ENCODE measurements at regions of chr5 and their contacts with region 1.

Region 1: DNA sequence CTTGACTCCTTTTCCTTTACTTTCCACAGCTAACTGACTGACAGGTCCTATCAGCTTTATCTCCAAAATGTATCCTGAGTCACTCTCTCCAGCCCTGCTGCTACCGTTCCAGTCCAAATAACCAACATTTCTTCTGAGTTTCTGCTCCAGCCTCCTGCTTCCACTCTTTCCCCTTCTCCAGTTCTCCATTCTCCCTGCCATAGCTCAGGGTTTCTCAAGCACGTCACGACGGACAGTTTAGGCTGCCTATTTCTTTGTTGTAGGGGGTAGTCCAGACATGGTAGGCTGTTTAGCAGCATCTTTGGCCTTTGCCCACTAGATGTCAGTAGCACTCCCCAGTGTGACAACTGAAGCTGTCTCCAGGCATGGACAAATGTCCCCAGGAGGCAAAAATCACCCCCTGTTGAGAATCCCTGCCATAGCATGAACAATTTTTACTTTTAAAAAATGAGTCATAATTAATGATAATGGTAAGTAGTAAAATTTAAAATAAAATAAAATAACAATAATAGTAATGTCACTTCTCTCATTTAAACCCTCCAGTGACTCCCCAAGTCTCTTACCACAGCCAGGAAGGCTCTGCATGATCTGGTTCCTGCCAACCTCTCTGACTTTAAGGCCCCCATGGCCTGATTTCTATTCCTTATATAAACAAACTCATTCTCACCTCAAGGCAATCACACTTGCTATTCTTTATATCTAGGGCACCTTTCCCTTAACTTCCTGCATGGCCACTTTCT is 105.4 kb upstream of the FER start:
- DNase-seq: peak; percentile 82
- H3K4me3 ChIP-seq: no peak overlapping the region
- H3K27ac ChIP-seq: no peak overlapping the region
- H3K4me1 ChIP-seq: peaks cover 5% of the 10 kb centered on the region
- H3K27me3 ChIP-seq: no peaks in the 10 kb centered on the region
- CTCF ChIP-seq: peak; percentile 84 to 93
- POLR2A ChIP-seq: no peak

Region 2: DNA sequence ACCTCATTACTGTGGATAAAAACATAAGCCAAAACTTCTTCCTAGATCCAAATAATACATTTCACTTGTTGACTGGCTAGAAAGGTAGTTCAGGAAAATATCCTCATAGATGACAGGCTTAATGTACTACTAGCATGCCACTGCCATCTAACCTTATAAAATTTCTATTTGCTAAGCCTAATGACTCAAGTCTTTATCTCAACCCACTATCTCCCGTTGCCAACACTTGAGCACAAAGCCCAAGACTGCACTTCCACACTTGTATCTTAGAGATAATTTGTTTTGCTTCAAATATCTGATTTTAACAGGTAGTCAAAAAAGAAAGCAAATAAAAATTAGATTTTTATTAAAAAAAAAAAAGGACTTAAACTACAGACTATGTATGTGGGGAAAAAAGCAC is 303.1 kb before region 1 on chr5:
- CTCF ChIA-PET with region 1: no interaction called
- POLR2A ChIA-PET with region 1: no interaction called
- dilution Hi-C with region 1: no loop called
- intact Hi-C with region 1: no loop called
- DNase-seq: no peak
- H3K4me3 ChIP-seq: no peak overlapping the region
- H3K27ac ChIP-seq: no peak overlapping the region
- H3K4me1 ChIP-seq: no peaks in the 10 kb centered on the region
- H3K27me3 ChIP-seq: no peaks in the 10 kb centered on the region
- CTCF ChIP-seq: no peak
- POLR2A ChIP-seq: no peak

Region 3: DNA sequence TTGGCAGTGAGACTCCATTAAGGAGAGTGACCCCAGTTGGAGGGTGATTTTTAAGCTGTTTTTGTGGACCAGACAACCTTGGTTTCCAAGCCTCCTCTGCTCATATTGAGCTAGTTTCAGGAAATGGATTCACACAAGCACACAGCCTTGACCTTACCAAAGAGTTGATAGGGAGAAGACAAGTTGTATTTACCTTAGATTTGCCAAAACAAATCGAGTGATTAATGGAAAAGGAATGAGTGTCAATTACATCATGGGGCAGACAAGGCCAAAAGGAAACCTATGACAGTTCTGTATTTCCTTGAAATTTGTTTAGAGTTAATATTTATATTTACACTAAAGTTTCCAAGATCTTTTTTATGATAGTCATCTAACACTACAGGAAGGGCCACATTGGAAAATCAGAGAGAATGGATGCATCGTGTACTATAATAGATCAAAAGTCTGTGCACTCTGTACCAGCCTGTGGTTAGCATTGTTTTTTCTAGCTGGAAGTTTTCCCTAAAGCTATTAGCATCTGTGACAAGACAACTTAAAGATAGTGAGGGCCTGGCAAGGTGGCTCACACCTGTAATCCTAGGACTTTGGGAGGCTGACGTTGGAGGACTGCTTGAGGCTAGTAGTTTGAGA is 19.4 kb after region 1 on chr5:
- CTCF ChIA-PET with region 1: interaction called, 16 read pairs
- POLR2A ChIA-PET with region 1: no interaction called
- dilution Hi-C with region 1: no loop called
- intact Hi-C with region 1: no loop called
- DNase-seq: peak; percentile 72
- H3K4me3 ChIP-seq: no peak overlapping the region
- H3K27ac ChIP-seq: peak overlapping the region; percentile 71
- H3K4me1 ChIP-seq: peaks cover 13% of the 10 kb centered on the region
- H3K27me3 ChIP-seq: no peaks in the 10 kb centered on the region
- CTCF ChIP-seq: no peak
- POLR2A ChIP-seq: no peak

Region 4: GRCh38 chr5:108727651-108728565 is 85.6 kb after region 1 on chr5:
- CTCF ChIA-PET with region 1: interaction called, 10 read pairs
- POLR2A ChIA-PET with region 1: no interaction called
- dilution Hi-C with region 1: no loop called
- intact Hi-C with region 1: loop called (anchors 2 kb)
- DNase-seq: peak; percentile 92
- H3K4me3 ChIP-seq: peak overlapping the region; percentile 54 to 84 (median 71)
- H3K27ac ChIP-seq: peak overlapping the region; percentile 68
- H3K4me1 ChIP-seq: peaks cover 23% of the 10 kb centered on the region
- H3K27me3 ChIP-seq: no peaks in the 10 kb centered on the region
- CTCF ChIP-seq: no peak
- POLR2A ChIP-seq: peak; percentile 92

Region 5: DNA sequence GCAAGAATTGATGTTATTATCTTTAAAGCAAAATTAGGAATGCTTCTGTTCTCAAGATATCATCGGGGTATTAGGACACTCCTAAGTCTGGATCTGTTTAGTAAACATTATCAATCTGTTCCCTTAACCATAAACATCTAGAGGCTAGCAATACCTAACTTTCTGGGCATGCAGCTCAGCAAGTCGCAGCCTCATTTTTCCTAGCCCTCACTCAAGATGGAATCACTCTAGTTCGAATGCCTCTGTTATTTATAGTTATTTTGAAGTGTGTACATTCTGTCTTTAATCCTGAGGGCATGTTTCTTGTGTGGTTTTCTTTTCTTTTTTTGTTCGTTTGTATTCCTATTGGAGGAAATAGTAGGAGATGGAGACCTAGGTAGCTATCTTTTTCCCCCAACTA is 172.2 kb after region 1 on chr5:
- CTCF ChIA-PET with region 1: no interaction called
- POLR2A ChIA-PET with region 1: no interaction called
- dilution Hi-C with region 1: no loop called
- intact Hi-C with region 1: no loop called
- DNase-seq: no peak
- H3K4me3 ChIP-seq: no peak overlapping the region
- H3K27ac ChIP-seq: no peak overlapping the region
- H3K4me1 ChIP-seq: no peaks in the 10 kb centered on the region
- H3K27me3 ChIP-seq: no peaks in the 10 kb centered on the region
- CTCF ChIP-seq: no peak
- POLR2A ChIP-seq: no peak

Region 6: GRCh38 chr5:108919591-108920326 is 277.4 kb after region 1 on chr5:
- CTCF ChIA-PET with region 1: interaction called, 7 read pairs
- POLR2A ChIA-PET with region 1: no interaction called
- dilution Hi-C with region 1: no loop called
- intact Hi-C with region 1: loop called (anchors 2 kb)
- DNase-seq: peak; percentile 25
- H3K4me3 ChIP-seq: no peak overlapping the region
- H3K27ac ChIP-seq: no peak overlapping the region
- H3K4me1 ChIP-seq: no peaks in the 10 kb centered on the region
- H3K27me3 ChIP-seq: no peaks in the 10 kb centered on the region
- CTCF ChIP-seq: no peak
- POLR2A ChIP-seq: no peak

Region 7: DNA sequence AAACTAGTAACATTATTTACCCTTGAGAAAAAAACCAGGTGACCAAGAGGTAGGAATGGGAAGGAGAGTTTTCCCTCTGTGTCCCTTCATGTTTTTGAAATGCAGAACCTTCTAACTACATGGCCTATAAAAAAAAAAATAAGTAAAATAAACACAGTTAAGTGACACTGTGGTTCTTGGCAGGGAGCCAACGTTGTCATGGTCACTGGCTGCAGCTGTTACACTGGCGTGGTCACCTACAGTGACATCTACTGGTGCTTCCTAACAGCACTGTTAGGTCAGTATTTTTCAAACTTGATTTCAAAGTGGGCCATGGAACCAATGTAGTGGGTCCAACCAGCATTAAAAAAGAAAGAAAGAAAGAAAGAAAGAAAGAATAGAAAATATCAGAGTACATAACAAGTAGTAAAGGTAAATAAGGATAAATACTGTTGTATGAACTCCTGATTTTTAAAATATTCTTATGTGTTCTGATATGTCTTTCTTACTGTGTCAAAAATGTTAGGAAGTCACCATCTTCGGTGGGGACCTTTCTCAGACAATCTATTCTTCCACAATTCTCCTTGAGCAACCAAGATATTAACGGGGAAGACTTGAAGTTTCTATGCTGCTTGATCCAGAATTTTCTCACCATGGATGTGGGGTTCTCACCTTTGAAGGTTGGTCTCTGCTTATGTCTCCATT is 826.5 kb after region 1 on chr5:
- CTCF ChIA-PET with region 1: interaction called, 18 read pairs
- POLR2A ChIA-PET with region 1: no interaction called
- dilution Hi-C with region 1: no loop called
- intact Hi-C with region 1: loop called (anchors 1 kb)
- DNase-seq: peak; percentile 94
- H3K4me3 ChIP-seq: no peak overlapping the region
- H3K27ac ChIP-seq: no peak overlapping the region
- H3K4me1 ChIP-seq: peaks cover 2% of the 10 kb centered on the region
- H3K27me3 ChIP-seq: no peaks in the 10 kb centered on the region
- CTCF ChIP-seq: peak; percentile 69 to 73
- POLR2A ChIP-seq: no peak

Measured in endothelial cell of umbilical vein (primary cell).